ENCODE measurements at regions of chr14 and their contacts with region 1.

Region 1: DNA sequence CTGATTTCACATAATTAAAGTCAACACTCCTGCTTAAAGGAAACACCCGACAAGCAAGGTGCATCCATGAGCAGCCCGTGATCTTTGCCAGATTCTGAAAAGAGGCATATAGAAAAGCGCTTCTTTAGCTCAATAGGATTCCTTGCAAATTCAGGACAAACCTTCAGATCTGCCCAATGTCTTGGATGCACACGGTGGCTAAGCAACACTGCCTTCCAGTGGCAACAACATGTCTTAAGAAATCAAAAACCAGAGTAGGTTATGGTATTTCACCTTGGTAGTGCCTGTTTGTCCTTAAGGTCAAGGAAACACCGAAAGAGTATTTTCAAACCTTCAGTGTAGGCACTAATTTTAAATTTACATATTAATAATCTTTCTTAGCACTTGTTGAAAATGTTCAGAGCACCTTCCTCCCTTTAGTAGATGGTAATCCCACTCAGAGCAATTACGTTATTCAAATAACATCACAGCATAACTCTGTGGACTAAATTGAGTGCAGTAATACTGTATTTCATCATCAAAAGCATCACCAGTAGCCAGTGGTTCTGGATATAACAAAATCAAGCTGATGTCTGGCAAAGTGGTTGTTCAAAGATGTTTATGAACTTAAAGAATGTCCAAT is 58.0 kb upstream of the CDKN3 start:
- DNase-seq: no peak
- ATAC-seq: peak; percentile 47 to 51

Region 2: DNA sequence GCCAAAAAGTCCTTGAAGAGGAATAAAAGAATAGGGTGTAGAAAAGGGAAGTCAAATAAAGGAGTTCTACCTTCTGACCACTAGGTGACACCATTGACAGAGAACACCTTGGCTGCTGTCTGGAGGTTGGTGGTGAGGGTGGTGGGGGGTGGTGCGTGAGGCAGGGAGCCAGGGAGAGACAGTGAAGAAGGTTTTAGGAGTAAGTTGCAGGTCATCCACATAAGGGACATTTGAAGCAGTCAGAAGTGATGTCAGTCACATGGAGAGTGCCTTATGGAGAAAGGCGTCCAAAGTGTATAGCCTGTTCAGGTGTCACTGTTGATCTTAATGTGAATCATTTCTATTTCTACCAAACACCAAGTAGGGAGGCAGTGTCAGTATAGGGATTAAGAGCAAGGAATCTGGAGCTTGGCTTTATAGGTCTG is 906.4 kb before region 1 on chr14:
- intact Hi-C with region 1: loop called in 1 of 2 experiments (anchors 10 kb)
- DNase-seq: peak; percentile 19
- ATAC-seq: peak in 1 of 2 donors; percentile 43

Region 3: GRCh38 chr14:53850714-53851296 is 488.0 kb before region 1 on chr14:
- intact Hi-C with region 1: no loop called
- DNase-seq: no peak
- ATAC-seq: peak in 1 of 2 donors; percentile 84

Measured in left cardiac atrium (tissue), 4 donors.